Activated T-helper 2 cell treated with anti-CD3 and anti-CD28 coated beads, Interferon-gamma antibody, Interleukin-2, Interleukin-4, amounts not matched to agents 10 μg/mL and 5 μg/mL and 100 μg/mL, durations not matched to agents 14 hours and 24 hours and 36 hours (primary cell): ENCODE measurements at regions of chr2 and their contacts with region 1.

Region 1: GRCh38 chr2:223944703-223945531 is at the start of gene WDFY1:
- DNase-seq: peak; percentile 71
- H3K4me3 Mint-ChIP-seq: peak within 1 kb of the TSS; percentile 89
- H3K27ac Mint-ChIP-seq: peak within 1 kb of the TSS; percentile 85
- H3K4me1 Mint-ChIP-seq: peaks cover 48% of the 10 kb centered on the region
- H3K27me3 Mint-ChIP-seq: no peaks in the 10 kb centered on the region
- total RNA-seq, gene WDFY1: 22.2 and 23.3 TPM in 2 replicates

Region 2: DNA sequence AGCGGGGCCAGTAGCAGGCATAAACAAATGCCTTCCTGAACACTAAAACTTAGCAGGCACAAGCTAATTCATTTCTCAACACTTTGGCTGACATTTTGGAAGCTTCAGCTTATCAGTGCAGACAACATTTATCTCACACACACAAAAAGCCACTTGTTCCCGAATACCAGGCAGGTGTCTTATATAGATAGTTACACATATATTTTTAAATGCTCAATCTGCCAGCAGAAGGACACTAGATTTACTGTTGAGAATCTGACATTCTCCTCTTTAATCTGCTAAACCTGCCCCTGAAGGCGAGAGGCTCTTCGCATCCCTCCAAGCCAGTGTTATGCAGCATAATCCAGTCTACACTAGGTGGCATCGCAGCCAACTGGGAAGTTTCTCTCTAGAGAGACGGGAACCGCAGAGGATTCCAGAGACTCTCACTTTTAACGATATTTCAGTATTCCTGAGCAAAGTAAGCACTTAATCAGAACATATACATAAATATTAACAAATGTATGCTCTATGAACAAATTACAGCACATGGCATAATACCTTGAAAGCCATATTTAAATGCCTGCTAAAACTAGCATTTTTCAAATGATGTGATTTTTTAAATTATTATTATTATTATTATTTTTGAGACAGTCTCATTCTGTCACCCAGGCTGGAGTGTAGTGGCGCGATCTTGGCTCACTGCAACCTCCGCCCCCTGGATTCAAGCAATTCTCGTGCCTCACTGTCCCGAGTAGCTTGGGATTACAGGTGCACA is 252.5 kb before region 1 on chr2:
- intact Hi-C with region 1: loop called (anchors 10 kb)
- DNase-seq: no peak
- H3K4me3 Mint-ChIP-seq: no peak overlapping the region
- H3K27ac Mint-ChIP-seq: no peak overlapping the region
- H3K4me1 Mint-ChIP-seq: peaks cover 7% of the 10 kb centered on the region
- H3K27me3 Mint-ChIP-seq: peaks cover 25% of the 10 kb centered on the region

Region 3: GRCh38 chr2:223760838-223761502 is 183.9 kb before region 1 on chr2:
- intact Hi-C with region 1: loop called (anchors 2 kb)
- DNase-seq: peak; percentile 68
- H3K4me3 Mint-ChIP-seq: peak overlapping the region; percentile 61
- H3K27ac Mint-ChIP-seq: peak overlapping the region; percentile 92
- H3K4me1 Mint-ChIP-seq: peaks cover 40% of the 10 kb centered on the region
- H3K27me3 Mint-ChIP-seq: no peaks in the 10 kb centered on the region

Region 4: GRCh38 chr2:223896833-223897311 is 48.0 kb before region 1 on chr2:
- intact Hi-C with region 1: loop called (anchors 1 kb)
- DNase-seq: no peak
- H3K4me3 Mint-ChIP-seq: no peak overlapping the region
- H3K27ac Mint-ChIP-seq: peak overlapping the region; percentile 65
- H3K4me1 Mint-ChIP-seq: peaks cover 27% of the 10 kb centered on the region
- H3K27me3 Mint-ChIP-seq: no peaks in the 10 kb centered on the region

Region 5: DNA sequence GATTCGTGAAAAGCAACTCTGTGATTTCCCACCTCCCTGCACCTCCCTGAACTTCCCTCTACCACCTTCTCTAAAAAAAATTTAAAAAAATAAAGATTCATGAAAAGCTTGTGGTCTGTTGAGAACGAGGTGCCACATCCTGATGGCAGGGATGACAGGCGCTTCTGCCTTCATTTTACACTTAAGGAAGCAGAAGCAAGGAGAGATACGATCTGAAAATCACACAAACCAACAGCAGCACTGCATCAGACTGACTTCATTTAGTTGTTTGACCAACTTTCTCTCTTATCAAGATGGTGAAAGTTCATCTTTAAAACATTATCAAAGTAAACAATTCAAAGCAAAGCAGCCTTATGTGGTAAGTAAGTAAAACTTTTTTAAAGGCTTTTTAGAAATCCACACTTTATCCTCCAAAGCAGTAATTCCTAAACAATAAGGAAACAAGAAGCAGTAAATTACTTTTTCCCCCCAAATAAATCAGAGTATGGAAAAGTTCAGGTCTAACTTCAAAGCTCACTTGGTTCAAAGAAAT is 15.3 kb before region 1 on chr2:
- intact Hi-C with region 1: loop called (anchors 1 kb)
- DNase-seq: peak; percentile 38
- H3K4me3 Mint-ChIP-seq: peak overlapping the region; percentile 61
- H3K27ac Mint-ChIP-seq: peak overlapping the region; percentile 70
- H3K4me1 Mint-ChIP-seq: peaks cover 49% of the 10 kb centered on the region
- H3K27me3 Mint-ChIP-seq: no peaks in the 10 kb centered on the region

Region 6: GRCh38 chr2:223970343-223971128 is 25.6 kb after region 1 on chr2:
- intact Hi-C with region 1: no loop called
- DNase-seq: no peak
- H3K4me3 Mint-ChIP-seq: no peak overlapping the region
- H3K27ac Mint-ChIP-seq: no peak overlapping the region
- H3K4me1 Mint-ChIP-seq: peaks cover 11% of the 10 kb centered on the region
- H3K27me3 Mint-ChIP-seq: no peaks in the 10 kb centered on the region

Region 7: GRCh38 chr2:224025874-224026273 is 81.0 kb after region 1 on chr2:
- intact Hi-C with region 1: loop called (anchors 5 kb)
- DNase-seq: peak; percentile 74
- H3K4me3 Mint-ChIP-seq: peak overlapping the region; percentile 40
- H3K27ac Mint-ChIP-seq: peak overlapping the region; percentile 96
- H3K4me1 Mint-ChIP-seq: peaks cover 56% of the 10 kb centered on the region
- H3K27me3 Mint-ChIP-seq: no peaks in the 10 kb centered on the region